HCT116 (cell line): ENCODE measurements at regions of chr2 and their contacts with region 1.

Region 1: DNA sequence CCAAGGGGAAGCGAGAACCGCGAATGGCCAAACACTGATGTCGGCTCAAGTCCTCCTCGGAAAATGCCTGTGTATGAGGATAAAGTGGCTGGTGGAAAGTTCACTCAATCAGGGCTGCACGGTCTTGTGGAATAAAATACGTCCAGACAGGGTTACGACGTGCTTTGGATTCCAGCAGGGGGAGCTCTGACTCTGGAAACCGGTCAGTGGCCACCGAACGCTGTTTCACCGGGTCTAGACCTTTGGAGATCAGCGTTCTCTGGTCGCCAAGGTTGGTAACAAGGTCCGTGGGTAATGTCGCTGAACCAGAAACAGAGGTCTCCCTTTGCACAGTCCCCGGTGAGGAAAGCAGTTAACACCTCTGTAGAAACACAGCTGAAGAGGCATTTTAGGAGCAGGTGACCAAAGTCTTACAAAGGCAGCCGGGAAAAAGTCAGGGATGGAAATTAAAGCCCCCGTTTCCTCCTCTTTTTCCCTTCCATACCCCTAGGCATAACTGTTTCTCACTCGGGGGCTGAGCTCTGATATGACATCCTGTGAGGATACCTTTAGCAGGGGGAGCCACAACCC is 47.8 kb downstream of the CDCA7 start:
- DNase-seq: peak; percentile 80
- ATAC-seq: peak; percentile 96
- H3K4me3 ChIP-seq: peak overlapping the region; percentile 19 to 35
- H3K27ac ChIP-seq: no peak overlapping the region
- H3K4me1 ChIP-seq: peaks cover 0 to 14% of the 10 kb centered on the region in 2 experiments; a peak in 1 of 4 replicates
- H3K27me3 ChIP-seq: no peaks in the 10 kb centered on the region
- CTCF ChIP-seq: peak; percentile 85 to 91 (median 88)
- POLR2A ChIP-seq: no peak
- RAD21 ChIP-seq: peak; percentile 98

Region 2: GRCh38 chr2:172806493-172806892 is 596.0 kb before region 1 on chr2:
- CTCF ChIA-PET with region 1: interaction called, 4 read pairs
- POLR2A ChIA-PET with region 1: no interaction called
- RAD21 ChIA-PET with region 1: no interaction called
- intact Hi-C with region 1: loop called (anchors 2 kb)
- DNase-seq: peak; percentile 37
- ATAC-seq: peak; percentile 62
- H3K4me3 ChIP-seq: no peak overlapping the region
- H3K27ac ChIP-seq: no peak overlapping the region
- H3K4me1 ChIP-seq: no peaks in the 10 kb centered on the region
- H3K27me3 ChIP-seq: no peaks in the 10 kb centered on the region
- CTCF ChIP-seq: peak; percentile 81 to 92 (median 88)
- POLR2A ChIP-seq: no peak
- RAD21 ChIP-seq: peak; percentile 90

Region 3: DNA sequence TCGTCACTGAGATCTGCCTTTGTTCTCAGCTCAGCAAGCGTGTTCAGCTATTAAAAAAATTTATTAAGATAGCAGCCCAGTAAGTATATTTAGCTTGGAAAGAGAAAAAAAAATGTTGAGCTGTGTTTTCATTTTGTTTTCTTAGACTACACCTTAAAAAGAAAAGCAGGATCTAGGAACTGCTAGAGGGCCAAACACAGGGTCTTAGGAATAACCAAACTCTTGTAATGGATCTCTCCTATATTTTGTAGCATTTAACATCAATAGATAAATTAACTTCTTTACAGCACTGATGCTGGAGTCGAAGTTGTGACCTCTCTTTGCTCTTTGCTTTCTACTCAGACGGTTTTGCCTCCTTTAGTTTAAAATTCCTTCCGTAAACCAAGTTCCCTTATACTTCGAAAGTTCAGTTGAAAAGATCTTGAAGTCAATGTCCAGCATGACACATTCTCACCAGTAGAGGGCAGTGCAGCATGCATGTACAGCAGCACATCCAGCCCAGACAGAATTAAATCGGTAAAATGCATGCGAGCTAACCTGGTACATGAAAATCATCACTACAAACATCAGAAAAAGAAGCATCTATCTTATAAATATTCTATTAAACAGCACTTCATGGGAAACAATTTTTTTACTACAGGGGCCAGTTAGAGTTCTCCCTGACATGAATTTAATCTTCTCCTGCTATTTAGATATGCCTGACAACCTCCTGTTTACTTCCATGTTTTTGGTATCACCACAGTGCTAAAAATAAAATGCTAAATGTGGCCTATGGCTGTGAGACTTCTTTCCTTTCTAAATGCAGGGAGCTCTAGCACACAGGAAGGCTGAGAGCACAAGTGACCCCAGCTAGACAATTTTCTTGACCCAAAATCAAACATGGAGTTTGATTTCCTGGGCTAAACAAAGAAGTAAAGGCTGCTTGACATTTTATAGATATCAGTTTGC is 375.0 kb before region 1 on chr2:
- CTCF ChIA-PET with region 1: interaction called, 30 read pairs
- POLR2A ChIA-PET with region 1: no interaction called
- RAD21 ChIA-PET with region 1: no interaction called
- intact Hi-C with region 1: loop called (anchors 1 kb)
- DNase-seq: peak; percentile 83
- ATAC-seq: peak; percentile 91
- H3K4me3 ChIP-seq: no peak overlapping the region
- H3K27ac ChIP-seq: no peak overlapping the region
- H3K4me1 ChIP-seq: peaks cover 0 to 4% of the 10 kb centered on the region in 2 experiments; a peak in 2 of 4 replicates
- H3K27me3 ChIP-seq: no peaks in the 10 kb centered on the region
- CTCF ChIP-seq: peak; percentile 91 to 98 (median 94)
- POLR2A ChIP-seq: no peak
- RAD21 ChIP-seq: peak; percentile 97

Region 4: GRCh38 chr2:173571021-173571882 is 168.8 kb after region 1 on chr2:
- CTCF ChIA-PET with region 1: interaction called, 75 read pairs
- POLR2A ChIA-PET with region 1: interaction called, 5 read pairs
- RAD21 ChIA-PET with region 1: interaction called in 1 of 2 experiments, 10 read pairs
- intact Hi-C with region 1: loop called (anchors 1 kb)
- DNase-seq: peak; percentile 24
- ATAC-seq: peak; percentile 73
- H3K4me3 ChIP-seq: no peak overlapping the region
- H3K27ac ChIP-seq: no peak overlapping the region
- H3K4me1 ChIP-seq: peaks cover 16 to 35% of the 10 kb centered on the region in 2 experiments
- H3K27me3 ChIP-seq: no peaks in the 10 kb centered on the region
- CTCF ChIP-seq: peak; percentile 30 to 66 (median 50); a peak in 4 of 6 replicates
- POLR2A ChIP-seq: no peak
- RAD21 ChIP-seq: peak; percentile 82

Region 5: GRCh38 chr2:173749315-173749714 is 346.8 kb after region 1 on chr2:
- CTCF ChIA-PET with region 1: no interaction called
- POLR2A ChIA-PET with region 1: interaction called, 3 read pairs
- RAD21 ChIA-PET with region 1: no interaction called
- intact Hi-C with region 1: loop called (anchors 1 kb)
- DNase-seq: peak; percentile 27
- ATAC-seq: peak; percentile 52; the same call in 1 of the 2 replicates
- H3K4me3 ChIP-seq: no peak overlapping the region
- H3K27ac ChIP-seq: no peak overlapping the region
- H3K4me1 ChIP-seq: no peaks in the 10 kb centered on the region
- H3K27me3 ChIP-seq: no peaks in the 10 kb centered on the region
- CTCF ChIP-seq: peak; percentile 28 to 58 (median 42); a peak in 5 of 6 replicates
- POLR2A ChIP-seq: no peak
- RAD21 ChIP-seq: peak; percentile 77

Region 6: GRCh38 chr2:174039551-174040416 is 637.3 kb after region 1 on chr2:
- CTCF ChIA-PET with region 1: no interaction called
- POLR2A ChIA-PET with region 1: no interaction called
- RAD21 ChIA-PET with region 1: no interaction called
- intact Hi-C with region 1: loop called (anchors 10 kb)
- DNase-seq: peak; percentile 94
- ATAC-seq: peak; percentile 88
- H3K4me3 ChIP-seq: peak overlapping the region; percentile 8 to 27; a peak in 3 of 4 replicates
- H3K27ac ChIP-seq: peak overlapping the region; percentile 94
- H3K4me1 ChIP-seq: peaks cover 23 to 42% of the 10 kb centered on the region in 2 experiments
- H3K27me3 ChIP-seq: no peaks in the 10 kb centered on the region
- CTCF ChIP-seq: peak; percentile 81 to 83 (median 82)
- POLR2A ChIP-seq: peak; percentile 38
- RAD21 ChIP-seq: peak; percentile 79